Breast epithelium (tissue), 4 donors: ENCODE measurements at regions of chr10 and their contacts with region 1.

Region 1: GRCh38 chr10:122139627-122140170 is 131.4 kb upstream of the BTBD16 start:
- DNase-seq: no peak
- H3K4me3 ChIP-seq: no peak overlapping the region
- H3K27ac ChIP-seq: peak overlapping the region; percentile 35 to 50
- H3K4me1 ChIP-seq: no peaks in the 10 kb centered on the region
- H3K27me3 ChIP-seq: no peaks in the 10 kb centered on the region
- CTCF ChIP-seq: no peak
- POLR2A ChIP-seq: no peak

Region 2: GRCh38 chr10:121608469-121609190 is 531.1 kb before region 1 on chr10:
- intact Hi-C with region 1: loop called (anchors 10 kb)
- DNase-seq: peak in 1 of 2 donors; percentile 75
- H3K4me3 ChIP-seq: peak overlapping the region; percentile 24 to 65 (median 41)
- H3K27ac ChIP-seq: no peak overlapping the region
- H3K4me1 ChIP-seq: no peaks in the 10 kb centered on the region
- H3K27me3 ChIP-seq: peaks cover 0 to 3% of the 10 kb centered on the region in 2 donors
- CTCF ChIP-seq: peak; percentile 42 to 91 (median 66)
- POLR2A ChIP-seq: no peak